Activated CD8-positive, alpha-beta T cell treated with anti-CD3 and anti-CD28 coated beads, Interleukin-2, amount 10 ng/mL, durations not matched to agents 7 days and 5 days (primary cell): ENCODE measurements at regions of chr3 and their contacts with region 1.

Region 1: DNA sequence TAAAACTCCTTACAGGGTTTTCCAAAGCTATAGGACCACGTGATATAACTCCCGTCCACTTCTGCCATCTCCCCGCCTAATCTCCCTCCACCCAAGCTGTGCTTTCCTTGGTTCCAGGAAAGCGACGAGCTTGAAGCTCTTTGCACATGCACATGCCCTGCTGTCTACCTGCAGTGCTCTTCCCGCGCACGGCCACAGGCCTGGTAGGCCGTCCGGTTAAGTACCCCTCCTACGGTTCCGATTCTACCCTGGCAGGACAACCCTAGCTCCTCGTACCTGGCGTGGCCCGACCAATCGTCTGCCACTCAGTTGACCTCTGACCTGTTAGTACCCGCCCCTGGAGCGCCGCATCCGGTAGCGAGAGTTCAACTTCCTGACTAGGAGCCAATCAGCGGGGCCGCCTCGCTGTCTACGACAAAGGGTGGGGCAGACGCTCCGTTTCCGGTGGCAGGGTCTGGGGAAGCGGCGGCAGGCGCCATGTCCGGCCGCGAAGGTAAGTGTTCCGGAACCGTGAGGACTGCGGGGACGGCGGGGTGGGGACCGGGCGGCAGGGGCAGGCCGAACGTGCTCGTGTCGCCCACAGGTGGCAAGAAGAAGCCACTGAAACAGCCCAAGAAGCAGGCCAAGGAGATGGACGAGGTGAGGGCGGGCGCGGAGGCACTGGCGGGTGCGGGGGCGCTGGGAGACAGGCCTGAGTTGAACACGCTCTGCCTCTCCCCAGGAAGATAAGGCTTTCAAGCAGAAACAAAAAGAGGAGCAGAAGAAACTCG is at the starts of genes CCDC51 and TMA7:
- DNase-seq: peak; percentile 99
- ATAC-seq: peak; percentile 96
- H3K4me3 Mint-ChIP-seq: peak within 1 kb of the TSS; percentile 97
- H3K27ac Mint-ChIP-seq: peak within 1 kb of the TSS; percentile 96
- H3K4me1 Mint-ChIP-seq: peaks cover 34% of the 10 kb centered on the region
- H3K27me3 Mint-ChIP-seq: no peaks in the 10 kb centered on the region
- total RNA-seq, gene CCDC51: 16.3 to 16.5 TPM
- total RNA-seq, gene TMA7: 339 to 364 TPM

Region 2: GRCh38 chr3:47961815-47962618 is 478.0 kb before region 1 on chr3:
- CTCF ChIA-PET with region 1: no interaction called
- POLR2A ChIA-PET with region 1: no interaction called
- DNase-seq: peak; percentile 74
- ATAC-seq: peak; percentile 89
- H3K4me3 Mint-ChIP-seq: peak overlapping the region; percentile 29
- H3K27ac Mint-ChIP-seq: peak overlapping the region; percentile 85
- H3K4me1 Mint-ChIP-seq: peaks cover 28% of the 10 kb centered on the region
- H3K27me3 Mint-ChIP-seq: no peaks in the 10 kb centered on the region

Region 3: DNA sequence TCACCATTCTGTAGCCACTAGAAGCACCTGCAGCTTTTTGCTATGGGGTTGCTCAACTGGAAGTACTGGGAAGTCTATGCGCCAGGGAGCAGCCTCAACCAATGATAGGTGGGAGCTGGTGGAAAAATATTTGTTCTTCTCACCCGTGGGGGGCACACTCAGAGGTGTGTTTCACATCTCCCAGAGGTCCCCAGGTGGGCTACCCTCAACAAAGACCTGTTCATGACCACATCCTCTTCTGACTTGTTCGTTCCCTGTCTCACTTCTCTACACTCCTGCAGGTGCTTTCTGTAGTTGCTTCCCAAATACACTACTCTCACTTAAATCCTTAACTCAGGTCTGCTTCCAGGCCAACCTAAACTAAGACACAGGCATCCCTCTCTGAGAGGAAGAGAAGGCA is 213.1 kb before region 1 on chr3:
- CTCF ChIA-PET with region 1: interaction called, 79 read pairs
- POLR2A ChIA-PET with region 1: interaction called, 3 read pairs
- DNase-seq: no peak
- ATAC-seq: no peak
- H3K4me3 Mint-ChIP-seq: no peak overlapping the region
- H3K27ac Mint-ChIP-seq: no peak overlapping the region
- H3K4me1 Mint-ChIP-seq: peaks cover 11% of the 10 kb centered on the region
- H3K27me3 Mint-ChIP-seq: no peaks in the 10 kb centered on the region

Region 4: GRCh38 chr3:48273594-48274211 is 166.3 kb before region 1 on chr3:
- CTCF ChIA-PET with region 1: interaction called, 319 read pairs
- POLR2A ChIA-PET with region 1: interaction called, 7 read pairs
- DNase-seq: peak; percentile 72
- ATAC-seq: peak; percentile 44
- H3K4me3 Mint-ChIP-seq: no peak overlapping the region
- H3K27ac Mint-ChIP-seq: no peak overlapping the region
- H3K4me1 Mint-ChIP-seq: peaks cover 20% of the 10 kb centered on the region
- H3K27me3 Mint-ChIP-seq: no peaks in the 10 kb centered on the region

Region 5: DNA sequence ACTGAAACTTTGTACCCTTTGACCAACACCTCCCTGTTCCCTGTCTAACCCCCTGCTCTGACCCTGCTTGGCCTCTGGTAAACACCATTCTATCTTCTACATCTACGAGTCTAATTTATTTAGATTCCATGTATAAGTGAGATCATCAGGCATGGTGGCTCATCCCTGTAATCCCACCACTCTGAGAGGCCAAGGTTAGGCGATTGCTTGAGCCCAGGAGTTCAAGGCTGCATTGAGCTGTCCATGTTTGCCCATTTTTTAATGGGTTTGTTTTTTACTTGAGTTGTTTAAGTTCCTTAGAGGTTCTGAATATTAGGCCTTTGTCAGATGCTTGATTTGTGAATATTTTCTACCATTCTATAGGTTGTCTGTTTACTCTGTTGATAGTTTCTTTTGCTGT is 51.0 kb before region 1 on chr3:
- CTCF ChIA-PET with region 1: interaction called, 22 read pairs
- POLR2A ChIA-PET with region 1: no interaction called
- DNase-seq: no peak
- ATAC-seq: no peak
- H3K4me3 Mint-ChIP-seq: no peak overlapping the region
- H3K27ac Mint-ChIP-seq: no peak overlapping the region
- H3K4me1 Mint-ChIP-seq: no peaks in the 10 kb centered on the region
- H3K27me3 Mint-ChIP-seq: peaks cover 54% of the 10 kb centered on the region

Region 6: DNA sequence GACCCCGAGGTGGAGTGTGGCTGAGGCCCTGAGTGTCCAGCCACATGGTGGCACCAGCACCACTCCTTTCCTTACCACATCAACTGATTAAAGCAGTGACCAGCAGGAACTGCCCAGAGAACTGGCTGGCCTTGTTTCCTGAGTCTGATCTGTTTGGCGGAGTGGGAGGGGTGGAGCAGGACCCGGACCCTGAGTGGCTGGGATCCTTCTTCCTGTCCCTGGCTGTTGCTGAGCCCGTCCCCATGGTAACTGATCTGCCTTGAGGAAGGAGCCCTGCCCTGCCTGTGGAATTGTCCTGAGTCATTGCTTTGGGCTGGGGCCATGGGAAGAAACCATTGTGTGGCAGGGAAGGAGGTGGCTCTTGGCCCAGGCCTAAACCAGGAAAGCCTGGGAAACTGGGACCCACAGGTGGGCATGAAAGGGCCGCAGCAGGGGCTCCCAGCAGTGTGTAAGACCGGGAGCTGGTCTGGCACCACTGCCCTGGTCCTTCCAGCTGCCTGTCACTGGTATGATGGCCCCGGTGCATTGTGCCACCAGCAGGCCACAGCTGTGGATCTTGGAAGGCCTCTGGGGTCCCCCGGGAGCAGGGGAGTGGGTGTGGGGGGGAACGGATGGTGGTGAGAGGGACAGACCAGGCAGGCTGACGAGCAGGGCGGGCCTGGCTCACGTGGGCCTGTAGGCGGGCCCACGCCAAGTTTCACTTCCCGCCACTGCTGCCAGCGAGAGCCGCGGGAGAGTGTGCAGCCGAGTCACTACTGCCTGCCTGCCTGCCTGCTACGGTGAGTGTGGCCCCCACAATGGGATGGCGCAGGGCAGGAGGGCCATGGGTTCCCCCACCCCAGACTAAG is 25.8 kb after region 1 on chr3:
- CTCF ChIA-PET with region 1: interaction called, 208 read pairs
- POLR2A ChIA-PET with region 1: interaction called, 31 read pairs
- DNase-seq: peak; percentile 87
- ATAC-seq: peak; percentile 96
- H3K4me3 Mint-ChIP-seq: peak overlapping the region; percentile 96
- H3K27ac Mint-ChIP-seq: peak overlapping the region; percentile 97
- H3K4me1 Mint-ChIP-seq: peaks cover 57% of the 10 kb centered on the region
- H3K27me3 Mint-ChIP-seq: no peaks in the 10 kb centered on the region

Region 7: DNA sequence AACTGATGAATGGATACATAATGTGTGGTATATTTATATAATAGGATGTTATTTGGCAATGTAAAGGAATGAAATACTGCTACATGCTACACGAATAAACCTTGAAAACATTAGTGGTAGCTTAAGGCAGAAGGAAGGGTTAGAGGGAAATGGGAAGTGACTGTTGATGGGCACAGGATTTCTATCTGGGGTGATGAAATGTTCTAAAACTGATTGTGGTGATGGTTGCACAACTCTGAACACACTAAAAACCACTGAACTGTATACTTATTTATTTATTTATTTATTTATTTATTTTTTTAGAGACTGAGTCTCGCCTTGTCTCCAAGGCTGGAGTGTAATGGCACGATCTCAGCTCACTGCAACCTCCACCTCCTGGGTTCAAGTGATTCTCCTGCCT is 88.7 kb after region 1 on chr3:
- CTCF ChIA-PET with region 1: interaction called, 33 read pairs
- POLR2A ChIA-PET with region 1: interaction called, 3 read pairs
- DNase-seq: no peak
- ATAC-seq: no peak
- H3K4me3 Mint-ChIP-seq: no peak overlapping the region
- H3K27ac Mint-ChIP-seq: no peak overlapping the region
- H3K4me1 Mint-ChIP-seq: peaks cover 6% of the 10 kb centered on the region
- H3K27me3 Mint-ChIP-seq: no peaks in the 10 kb centered on the region